Activated CD4-positive, alpha-beta T cell treated with anti-CD3 and anti-CD28 coated beads, Interleukin-2, amount 10 ng/mL, durations not matched to agents 7 days and 5 days (primary cell): ENCODE measurements at regions of chr1 and their contacts with region 1.

Region 1: GRCh38 chr1:6343506-6344405 is 49.8 kb downstream of the ACOT7 start:
- DNase-seq: peak; percentile 76
- H3K4me3 Mint-ChIP-seq: no peak overlapping the region
- H3K27ac Mint-ChIP-seq: peak overlapping the region; percentile 73
- H3K4me1 Mint-ChIP-seq: peaks cover 21% of the 10 kb centered on the region
- H3K27me3 Mint-ChIP-seq: no peaks in the 10 kb centered on the region

Region 2: DNA sequence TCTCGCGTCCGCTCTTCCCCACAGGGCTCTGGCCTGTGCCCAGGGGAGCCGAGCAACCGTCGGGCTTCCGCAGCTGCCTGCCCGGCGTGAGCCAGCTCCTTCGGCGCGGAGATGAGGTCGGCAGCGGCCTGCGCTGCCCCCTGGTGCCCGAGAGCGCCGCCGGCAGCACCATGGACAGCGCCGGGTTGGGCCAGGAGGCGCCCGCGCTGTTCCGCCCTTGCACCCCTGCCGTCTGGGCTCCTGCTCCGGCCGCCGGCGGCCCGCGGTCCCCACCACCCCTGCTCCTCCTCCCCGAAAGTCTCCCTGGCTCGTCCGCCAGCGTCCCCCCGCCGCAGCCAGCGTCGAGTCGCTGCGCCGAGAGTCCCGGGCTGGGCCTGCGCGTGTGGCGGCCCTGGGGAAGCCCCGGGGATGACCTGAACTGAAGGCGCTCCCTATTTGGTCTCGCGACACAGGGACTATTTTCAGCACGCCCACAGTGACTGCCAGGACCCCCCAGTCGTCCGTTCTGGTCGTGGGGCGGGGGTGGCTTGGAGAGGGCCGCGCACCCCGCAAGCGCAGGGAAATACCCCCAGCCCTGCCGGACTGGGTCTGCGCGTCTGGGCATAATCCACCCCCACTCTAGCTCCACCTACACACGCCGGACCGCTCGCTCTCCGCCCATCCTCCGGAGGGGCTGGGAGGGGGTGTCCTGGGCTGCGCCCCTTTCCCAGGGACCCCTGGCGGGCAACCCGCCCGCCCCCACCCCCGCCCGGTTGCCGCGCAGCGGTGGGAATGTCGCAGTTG is 98.5 kb before region 1 on chr1:
- CTCF ChIA-PET with region 1: interaction called, 22 read pairs
- POLR2A ChIA-PET with region 1: no interaction called
- DNase-seq: peak; percentile 79
- H3K4me3 Mint-ChIP-seq: no peak overlapping the region
- H3K27ac Mint-ChIP-seq: no peak overlapping the region
- H3K4me1 Mint-ChIP-seq: peaks cover 22% of the 10 kb centered on the region
- H3K27me3 Mint-ChIP-seq: peaks cover 61% of the 10 kb centered on the region

Region 3: GRCh38 chr1:6359216-6360116 is 15.7 kb after region 1 on chr1:
- CTCF ChIA-PET with region 1: interaction called, 17 read pairs
- POLR2A ChIA-PET with region 1: no interaction called
- DNase-seq: peak; percentile 83
- H3K4me3 Mint-ChIP-seq: peak overlapping the region; percentile 65
- H3K27ac Mint-ChIP-seq: peak overlapping the region; percentile 96
- H3K4me1 Mint-ChIP-seq: peaks cover 69% of the 10 kb centered on the region
- H3K27me3 Mint-ChIP-seq: no peaks in the 10 kb centered on the region

Region 4: DNA sequence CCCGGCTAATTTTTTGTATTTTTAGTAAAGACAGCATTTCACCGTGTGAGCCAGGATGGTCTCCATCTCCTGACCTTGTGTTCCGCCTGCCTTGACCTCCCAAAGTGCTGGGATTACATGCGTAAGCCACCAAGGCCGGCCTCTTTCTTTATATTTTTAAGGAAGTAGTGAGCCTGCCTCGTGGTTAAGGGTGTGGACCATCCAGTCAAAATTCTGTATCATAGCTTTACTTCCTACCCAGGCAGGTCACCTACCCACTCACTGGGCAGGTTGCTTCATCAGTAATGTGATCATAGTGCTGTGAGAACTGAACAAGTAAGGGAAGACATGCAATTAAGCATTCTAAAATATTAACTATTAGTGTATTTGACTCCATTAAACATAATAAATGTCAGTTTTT is 57.9 kb after region 1 on chr1:
- CTCF ChIA-PET with region 1: interaction called, 12 read pairs
- POLR2A ChIA-PET with region 1: no interaction called
- DNase-seq: no peak
- H3K4me3 Mint-ChIP-seq: no peak overlapping the region
- H3K27ac Mint-ChIP-seq: no peak overlapping the region
- H3K4me1 Mint-ChIP-seq: peaks cover 15% of the 10 kb centered on the region
- H3K27me3 Mint-ChIP-seq: peaks cover 10% of the 10 kb centered on the region

Region 5: DNA sequence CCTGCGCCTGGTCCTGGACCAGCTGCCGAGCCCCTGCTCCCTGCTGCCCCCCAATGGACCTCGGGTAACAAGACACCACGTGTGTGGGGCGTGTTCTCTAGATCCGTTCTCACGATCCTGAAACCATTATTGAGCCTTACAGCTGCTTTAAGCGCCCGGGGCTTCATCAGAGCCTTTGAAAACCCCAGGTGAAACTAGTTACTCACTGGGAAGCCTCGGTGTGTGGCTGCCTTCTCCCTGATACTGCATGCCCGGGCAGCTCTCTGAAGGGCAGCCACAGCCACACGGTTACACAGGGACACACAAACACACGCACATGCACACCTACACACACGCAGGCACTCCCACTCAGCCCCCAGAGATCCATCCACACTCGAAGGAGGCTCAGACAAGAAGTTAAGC is 70.7 kb after region 1 on chr1:
- CTCF ChIA-PET with region 1: interaction called, 11 read pairs
- POLR2A ChIA-PET with region 1: no interaction called
- DNase-seq: peak; percentile 54
- H3K4me3 Mint-ChIP-seq: peak overlapping the region; percentile 36
- H3K27ac Mint-ChIP-seq: peak overlapping the region; percentile 9
- H3K4me1 Mint-ChIP-seq: peaks cover 10% of the 10 kb centered on the region
- H3K27me3 Mint-ChIP-seq: peaks cover 57% of the 10 kb centered on the region